Right ventricle myocardium inferior (tissue), 1 donor: ENCODE measurements at regions of chr20 and their contacts with region 1.

Region 1: DNA sequence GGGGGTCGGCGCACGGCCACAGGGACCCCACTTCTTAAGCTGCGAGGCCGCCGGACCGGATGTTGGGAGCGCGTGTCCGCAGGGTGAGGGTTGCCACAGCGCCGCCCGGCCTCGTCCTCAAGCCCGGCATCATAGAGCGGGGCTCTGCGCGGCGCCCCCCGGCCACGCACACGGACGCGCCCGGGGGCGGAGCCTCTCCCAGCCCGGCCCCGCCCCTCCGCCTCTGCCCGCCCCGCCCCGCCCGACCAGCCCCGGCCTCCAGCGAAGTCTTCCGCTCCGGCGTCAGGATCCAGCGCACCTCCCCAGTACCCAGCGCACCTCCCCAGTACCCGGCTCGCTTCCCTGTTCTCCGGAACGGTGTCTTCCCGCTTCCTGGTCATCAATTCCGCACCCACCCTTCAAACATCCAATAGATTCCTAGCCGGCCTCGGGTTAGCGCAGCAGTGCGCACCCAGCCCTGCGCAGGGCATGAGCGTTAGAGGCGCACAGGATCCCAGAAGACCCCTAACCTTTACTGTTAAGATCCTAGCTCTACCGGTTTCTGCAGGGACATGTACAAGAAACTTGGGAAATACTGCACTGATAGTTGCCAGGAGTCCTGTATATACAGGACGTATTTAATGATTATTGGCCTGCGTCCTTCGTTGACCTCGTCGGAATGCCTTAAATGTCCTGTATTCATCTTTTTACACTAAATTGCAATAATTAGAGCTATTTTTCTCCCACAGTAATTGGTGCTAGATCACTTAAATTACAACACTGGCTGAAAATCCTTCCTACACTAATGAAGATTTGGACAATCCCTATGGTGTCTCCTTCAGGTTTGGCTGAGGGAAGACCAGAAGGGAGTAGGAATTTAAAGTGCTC is 535 bp upstream of the DNAAF9 start:
- DNase-seq: peak; percentile 88
- ATAC-seq: peak; percentile 84

Region 2: GRCh38 chr20:3340443-3340842 is 67.6 kb before region 1 on chr20:
- intact Hi-C with region 1: loop called (anchors 5 kb)
- DNase-seq: peak; percentile 87
- ATAC-seq: peak; percentile 92

Region 3: DNA sequence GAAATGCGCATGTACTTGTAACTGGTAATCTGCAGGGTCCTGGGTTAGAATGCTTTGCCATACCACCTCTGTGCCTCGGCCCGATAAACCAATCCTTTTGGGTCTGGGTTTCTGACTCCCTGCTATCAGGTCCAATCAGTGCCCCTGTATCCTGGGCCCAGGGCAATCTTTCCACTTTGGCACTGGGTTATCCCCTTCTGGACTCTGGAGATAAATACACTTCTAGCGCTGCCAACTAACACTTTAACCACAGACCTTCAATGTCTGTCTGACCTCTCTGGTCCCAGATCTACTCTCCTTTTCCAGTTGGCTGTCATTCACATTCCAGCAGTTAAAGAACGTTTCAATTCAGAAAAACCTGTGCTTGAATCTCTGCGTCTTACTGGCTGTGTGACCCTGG is 55.8 kb before region 1 on chr20:
- intact Hi-C with region 1: no loop called
- DNase-seq: no peak
- ATAC-seq: peak; percentile 73

Region 4: GRCh38 chr20:3470627-3471396 is 62.8 kb after region 1 on chr20 and contains the start of gene ATRN:
- intact Hi-C with region 1: loop called (anchors 1 kb)
- DNase-seq: peak; percentile 96
- ATAC-seq: peak; percentile 99
- total RNA-seq, gene ATRN: 32.5 TPM